ENCODE measurements at regions of chrX and their contacts with region 1.

Region 1: DNA sequence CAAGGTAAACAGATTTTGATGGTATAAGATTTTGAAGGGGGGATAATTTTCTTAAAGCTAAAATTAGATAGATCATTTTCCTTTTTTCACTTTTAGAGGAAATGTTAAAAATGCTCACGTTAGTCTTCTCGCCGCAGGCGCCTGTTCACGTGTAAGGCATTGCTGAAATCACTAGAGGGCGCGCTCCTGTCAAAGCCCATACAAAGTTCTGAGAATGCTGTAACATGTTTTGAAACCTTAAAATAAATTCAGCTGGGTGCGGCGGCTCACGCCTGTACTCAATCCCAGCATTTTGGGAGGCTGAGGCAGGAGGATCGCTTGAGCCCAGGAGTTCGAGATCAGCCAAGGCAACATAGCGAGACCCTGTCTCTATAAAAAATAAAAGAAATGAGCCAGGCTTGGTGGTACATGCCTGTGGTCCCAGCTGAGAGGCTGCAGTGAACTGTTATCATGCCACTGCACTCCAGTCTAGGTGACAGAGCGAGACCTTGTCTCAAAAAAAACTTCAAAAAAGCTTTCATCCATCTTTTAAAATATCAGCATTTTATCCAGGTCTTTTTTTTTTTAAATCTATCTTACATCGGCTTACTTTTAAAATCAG is 138.0 kb downstream of the RBMX2 start:
- DNase-seq: peak; percentile 50
- H3K4me3 Mint-ChIP-seq: no peak overlapping the region
- H3K27ac Mint-ChIP-seq: no peak overlapping the region
- H3K4me1 Mint-ChIP-seq: no peaks in the 10 kb centered on the region
- H3K27me3 Mint-ChIP-seq: peaks cover 17% of the 10 kb centered on the region
- CTCF ChIP-seq: peak; percentile 43

Region 2: DNA sequence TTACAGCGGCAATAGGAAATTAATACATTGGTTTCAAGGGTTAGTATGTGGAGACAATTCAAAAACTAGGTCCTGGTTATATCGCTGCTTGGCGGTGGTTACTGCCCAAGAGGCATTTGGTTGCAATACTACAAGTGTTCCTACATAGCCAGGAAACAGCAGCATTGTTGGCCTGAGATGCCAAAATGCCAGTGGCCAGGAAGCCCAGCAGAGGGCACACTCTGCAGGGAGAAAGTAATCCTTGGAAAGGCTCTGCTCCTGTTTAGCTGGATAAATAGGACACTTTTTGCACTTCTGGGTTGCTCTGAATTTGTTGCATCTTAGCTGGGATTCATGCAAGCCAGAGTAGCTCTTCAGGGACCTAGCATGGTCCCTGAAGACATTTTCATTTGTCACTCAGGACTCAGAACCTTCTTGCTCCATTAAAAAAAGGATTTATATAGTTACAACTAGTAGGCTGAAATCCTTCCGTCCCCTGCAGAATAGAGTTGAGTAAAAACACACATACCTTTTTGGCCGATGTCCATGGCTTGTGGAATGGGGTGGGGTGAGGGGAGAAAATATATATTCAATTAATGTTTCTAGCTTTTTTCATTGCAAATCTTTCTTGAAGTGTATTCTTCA is 146.3 kb before region 1 on chrX:
- CTCF ChIA-PET with region 1: no interaction called
- intact Hi-C with region 1: loop called (anchors 10 kb)
- DNase-seq: peak; percentile 51
- H3K4me3 Mint-ChIP-seq: no peak overlapping the region
- H3K27ac Mint-ChIP-seq: no peak overlapping the region
- H3K4me1 Mint-ChIP-seq: no peaks in the 10 kb centered on the region
- H3K27me3 Mint-ChIP-seq: peaks cover 57% of the 10 kb centered on the region
- CTCF ChIP-seq: peak; percentile 45

Region 3: GRCh38 chrX:130575831-130576389 is 36.1 kb after region 1 on chrX:
- CTCF ChIA-PET with region 1: interaction called, 7 read pairs
- intact Hi-C with region 1: loop called (anchors 5 kb)
- DNase-seq: peak; percentile 21
- H3K4me3 Mint-ChIP-seq: no peak overlapping the region
- H3K27ac Mint-ChIP-seq: no peak overlapping the region
- H3K4me1 Mint-ChIP-seq: no peaks in the 10 kb centered on the region
- H3K27me3 Mint-ChIP-seq: no peaks in the 10 kb centered on the region
- CTCF ChIP-seq: peak; percentile 78

Region 4: GRCh38 chrX:130704053-130705038 is 164.5 kb after region 1 on chrX:
- CTCF ChIA-PET with region 1: no interaction called
- intact Hi-C with region 1: loop called (anchors 10 kb)
- DNase-seq: no peak
- H3K4me3 Mint-ChIP-seq: no peak overlapping the region
- H3K27ac Mint-ChIP-seq: no peak overlapping the region
- H3K4me1 Mint-ChIP-seq: no peaks in the 10 kb centered on the region
- H3K27me3 Mint-ChIP-seq: no peaks in the 10 kb centered on the region
- CTCF ChIP-seq: no peak

Region 5: DNA sequence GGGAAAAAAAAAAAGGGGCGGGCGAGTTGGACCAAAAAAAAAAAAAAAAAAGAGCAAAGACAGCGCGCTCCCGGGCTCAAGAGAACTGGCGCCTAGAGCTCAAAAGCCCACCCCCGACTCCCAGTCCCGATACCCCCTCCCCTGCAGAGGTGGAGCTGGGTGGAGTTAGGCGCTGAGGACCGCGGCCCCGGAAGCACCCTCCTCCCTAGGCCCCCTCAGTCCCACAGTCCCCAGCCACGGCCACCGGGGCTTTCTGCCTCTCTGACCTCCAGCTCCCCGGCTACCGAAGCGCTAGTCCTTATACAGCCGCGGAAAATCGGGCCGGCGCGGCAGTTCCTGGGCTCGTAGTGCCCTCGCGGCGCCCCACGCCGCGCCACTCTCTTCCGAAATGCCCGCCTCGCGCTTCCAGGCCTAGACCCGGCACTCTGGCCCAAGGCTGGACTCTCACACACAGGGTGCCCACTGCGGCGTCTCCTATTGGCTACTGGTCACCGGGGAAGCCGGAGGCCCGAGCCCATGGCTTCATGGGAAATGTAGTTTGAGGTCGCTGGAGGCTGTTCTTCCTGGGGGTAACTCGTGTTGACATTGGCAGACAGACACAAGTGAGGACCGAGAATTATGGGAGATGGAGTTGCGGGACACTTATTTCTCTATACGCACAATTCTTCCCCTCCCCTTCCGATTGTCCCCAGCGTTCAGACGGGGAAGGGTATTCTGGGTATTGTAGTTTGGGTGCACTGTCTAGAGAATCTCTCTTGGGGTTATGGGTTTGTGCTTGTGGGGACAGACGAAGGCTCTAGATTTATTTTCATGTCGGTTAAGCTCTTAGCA is 363.2 kb after region 1 on chrX and contains the start of gene ENOX2:
- CTCF ChIA-PET with region 1: no interaction called
- intact Hi-C with region 1: loop called (anchors 5 kb)
- DNase-seq: peak; percentile 92
- H3K4me3 Mint-ChIP-seq: no peak within 1 kb of the TSS
- H3K27ac Mint-ChIP-seq: peak within 1 kb of the TSS; percentile 76
- H3K4me1 Mint-ChIP-seq: peaks cover 9% of the 10 kb centered on the region
- H3K27me3 Mint-ChIP-seq: no peaks in the 10 kb centered on the region
- CTCF ChIP-seq: no peak
- total RNA-seq, gene ENOX2: 23.4 and 28.9 TPM in 2 replicates

Region 6: DNA sequence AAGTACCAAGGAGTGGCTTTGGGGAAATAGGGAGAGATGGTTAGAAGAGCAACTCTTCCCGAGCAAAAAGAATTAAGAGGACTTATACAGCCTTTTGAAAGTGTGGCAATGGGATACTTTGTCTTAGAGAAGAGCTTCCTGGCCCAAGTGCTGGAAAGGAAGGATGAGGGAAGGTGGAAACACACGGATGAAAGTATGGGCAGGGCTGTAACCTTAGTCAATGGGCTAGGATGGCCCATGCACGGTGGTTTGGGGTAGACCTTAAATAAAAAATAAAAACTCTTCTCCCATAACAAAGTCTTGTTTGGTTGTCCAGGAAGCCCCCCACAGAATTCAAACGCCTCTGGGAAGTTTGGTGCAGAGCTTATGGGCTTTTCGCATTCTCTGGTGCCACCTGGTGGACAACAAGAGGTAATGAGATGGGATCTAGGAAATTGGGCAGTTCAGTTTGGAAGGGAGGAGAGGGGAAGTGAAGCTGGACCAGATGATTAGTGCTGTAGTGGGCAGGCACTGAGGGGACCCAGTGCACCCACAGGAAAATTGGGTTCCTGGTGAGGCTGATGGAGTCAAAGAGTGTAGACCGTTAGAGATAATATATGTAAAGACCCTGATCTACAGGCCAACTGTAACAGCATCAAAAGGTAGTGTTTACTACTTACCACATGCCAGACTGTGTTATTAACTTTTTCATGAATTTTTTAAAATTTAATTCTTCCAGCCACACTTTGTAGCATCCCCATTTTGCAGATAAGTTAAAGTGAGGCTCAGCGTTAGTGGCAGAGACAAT is 377.0 kb after region 1 on chrX:
- CTCF ChIA-PET with region 1: no interaction called
- intact Hi-C with region 1: loop called (anchors 2 kb)
- DNase-seq: peak; percentile 42
- H3K4me3 Mint-ChIP-seq: no peak overlapping the region
- H3K27ac Mint-ChIP-seq: no peak overlapping the region
- H3K4me1 Mint-ChIP-seq: no peaks in the 10 kb centered on the region
- H3K27me3 Mint-ChIP-seq: peaks cover 26% of the 10 kb centered on the region
- CTCF ChIP-seq: peak; percentile 72